ENCODE measurements at regions of chr1 and their contacts with region 1.

Region 1: DNA sequence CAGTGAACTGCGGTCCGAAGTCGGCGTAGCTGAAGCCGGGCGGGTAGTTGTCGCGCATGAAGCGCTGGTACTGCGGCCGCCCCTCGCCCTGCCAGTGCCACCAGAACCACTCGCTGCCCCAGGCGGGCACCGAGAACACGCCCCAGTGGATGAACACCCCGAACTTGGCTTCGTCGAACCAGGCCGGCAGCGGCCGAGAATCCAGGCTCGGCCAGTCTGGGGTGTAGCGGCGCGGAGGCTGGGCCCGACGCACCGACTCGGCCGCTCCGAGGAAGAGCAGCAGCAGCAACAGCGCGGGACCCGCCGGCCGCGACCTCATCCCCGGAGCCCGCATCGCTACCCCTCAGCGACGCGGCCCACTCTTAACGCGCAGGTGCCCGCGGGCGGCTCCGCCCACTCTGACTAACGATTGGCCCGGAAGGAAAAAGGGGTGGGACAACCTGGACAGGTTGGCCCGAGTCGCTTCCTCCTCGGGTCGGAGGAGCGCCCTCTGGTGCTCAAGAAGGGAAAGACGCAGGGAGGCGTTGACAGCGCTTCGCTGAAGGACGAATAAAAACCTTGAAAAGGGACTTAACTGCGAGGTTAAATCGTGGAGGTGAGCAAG is at the start of gene FUCA1:
- DNase-seq: peak; percentile 87
- H3K4me3 Mint-ChIP-seq: peak within 1 kb of the TSS; percentile 70
- H3K27ac Mint-ChIP-seq: peak within 1 kb of the TSS; percentile 40
- H3K4me1 Mint-ChIP-seq: peaks cover 30% of the 10 kb centered on the region
- H3K27me3 Mint-ChIP-seq: peaks cover 16% of the 10 kb centered on the region
- CTCF ChIP-seq: peak; percentile 83
- total RNA-seq, gene FUCA1: 7.9 and 8.6 TPM in 2 replicates

Region 2: GRCh38 chr1:23800400-23801337 is 67.4 kb before region 1 on chr1 and contains the start of gene GALE:
- CTCF ChIA-PET with region 1: interaction called, 4 read pairs
- POLR2A ChIA-PET with region 1: interaction called, 22 read pairs
- intact Hi-C with region 1: no loop called
- DNase-seq: peak; percentile 96
- H3K4me3 Mint-ChIP-seq: peak within 1 kb of the TSS; percentile 90
- H3K27ac Mint-ChIP-seq: peak within 1 kb of the TSS; percentile 91
- H3K4me1 Mint-ChIP-seq: no peaks in the 10 kb centered on the region
- H3K27me3 Mint-ChIP-seq: no peaks in the 10 kb centered on the region
- CTCF ChIP-seq: no peak
- total RNA-seq, gene GALE: 112 and 143 TPM in 2 replicates

Region 3: DNA sequence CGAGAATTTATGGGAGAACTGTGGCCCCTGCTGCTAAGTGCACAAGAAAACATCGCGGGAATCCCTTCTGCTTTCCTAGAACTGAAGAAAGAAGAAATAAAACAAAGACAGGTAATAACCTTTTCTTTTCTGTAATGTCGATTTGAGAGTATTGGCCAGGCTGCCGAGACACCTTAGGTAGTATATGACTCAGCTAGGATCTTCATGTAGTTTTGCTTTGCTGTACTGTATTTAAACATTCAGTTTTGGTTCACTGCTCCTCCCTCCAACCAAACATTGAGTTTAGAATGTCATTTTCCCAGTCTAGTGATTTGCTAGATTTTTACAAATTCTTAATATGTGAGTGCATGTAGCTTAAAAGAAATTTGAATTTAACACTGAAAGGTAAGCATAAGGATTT is 780.9 kb after region 1 on chr1:
- CTCF ChIA-PET with region 1: no interaction called
- POLR2A ChIA-PET with region 1: no interaction called
- intact Hi-C with region 1: no loop called
- DNase-seq: no peak
- H3K4me3 Mint-ChIP-seq: no peak overlapping the region
- H3K27ac Mint-ChIP-seq: no peak overlapping the region
- H3K4me1 Mint-ChIP-seq: peaks cover 15% of the 10 kb centered on the region
- H3K27me3 Mint-ChIP-seq: no peaks in the 10 kb centered on the region
- CTCF ChIP-seq: no peak

Measured in MCF 10A (cell line).